Calu3 (cell line): ENCODE measurements at regions of chr1 and their contacts with region 1.

Region 1: DNA sequence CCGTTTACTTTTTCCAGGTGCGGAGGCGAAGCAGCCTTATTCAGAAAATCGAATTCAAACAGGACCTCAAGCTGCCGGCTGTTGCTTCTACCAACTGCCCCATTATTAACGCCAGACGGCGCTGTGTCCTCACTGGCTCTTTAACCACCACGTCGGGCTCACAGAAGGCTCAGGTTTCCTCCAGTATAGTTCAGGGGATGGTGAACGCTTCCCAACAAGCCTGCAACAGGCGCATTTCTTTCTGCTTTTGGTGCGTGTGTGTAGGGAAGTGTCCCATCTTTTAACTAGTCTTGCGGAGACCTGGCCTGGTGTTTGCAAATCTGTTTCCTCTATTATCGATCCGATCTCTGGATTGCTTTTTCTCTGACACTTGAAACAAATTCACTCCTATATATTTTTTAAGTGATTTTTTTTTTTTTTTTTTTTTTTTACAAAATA is 791 bp upstream of the STUM start:
- DNase-seq: peak; percentile 85
- H3K4me3 Mint-ChIP-seq: peak overlapping the region; percentile 51
- H3K27ac Mint-ChIP-seq: no peak overlapping the region
- H3K4me1 Mint-ChIP-seq: no peaks in the 10 kb centered on the region
- H3K27me3 Mint-ChIP-seq: peaks cover 70% of the 10 kb centered on the region
- CTCF ChIP-seq: peak; percentile 70

Region 2: GRCh38 chr1:226092965-226093364 is 454.8 kb before region 1 on chr1:
- CTCF ChIA-PET with region 1: no interaction called
- intact Hi-C with region 1: no loop called
- DNase-seq: no peak
- H3K4me3 Mint-ChIP-seq: no peak overlapping the region
- H3K27ac Mint-ChIP-seq: no peak overlapping the region
- H3K4me1 Mint-ChIP-seq: peaks cover 7% of the 10 kb centered on the region
- H3K27me3 Mint-ChIP-seq: no peaks in the 10 kb centered on the region
- CTCF ChIP-seq: no peak

Region 3: DNA sequence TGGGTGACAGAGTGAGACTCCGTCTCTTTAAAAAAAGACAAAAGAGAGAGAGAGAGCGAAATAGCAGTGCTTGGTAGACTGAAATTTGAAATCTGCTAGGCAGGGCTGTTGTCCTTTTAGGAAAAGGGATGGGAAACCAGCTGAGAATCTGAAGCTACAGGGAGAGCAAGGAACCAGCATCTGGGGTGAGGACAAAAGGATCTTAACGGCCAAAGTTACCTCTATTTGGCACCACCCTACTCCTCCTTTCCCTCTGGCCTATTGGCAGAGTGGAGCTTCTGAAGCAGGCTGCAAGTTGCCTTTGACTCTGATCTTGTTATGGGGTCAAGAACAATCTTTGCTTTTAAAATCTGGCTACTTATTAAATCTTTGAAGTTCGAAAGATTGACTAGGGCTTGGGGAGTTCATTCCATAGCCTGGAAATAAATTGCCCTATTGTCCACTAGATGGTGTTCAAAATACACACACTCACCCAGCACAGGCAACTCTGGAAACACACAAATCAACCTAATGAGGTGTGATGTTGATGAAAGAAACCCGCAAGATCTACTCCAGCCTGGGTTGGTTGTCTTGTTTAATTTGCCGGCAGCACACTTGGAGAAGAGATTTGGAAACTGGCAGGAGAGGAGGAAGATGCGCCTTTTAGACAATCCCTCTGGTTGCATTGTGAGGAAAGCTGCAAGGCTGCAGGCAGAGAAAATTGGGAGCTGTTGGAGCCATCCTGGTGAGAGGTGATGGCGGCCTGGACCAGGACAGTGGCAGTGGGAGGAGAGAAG is 123.4 kb before region 1 on chr1:
- CTCF ChIA-PET with region 1: interaction called, 6 read pairs
- intact Hi-C with region 1: loop called (anchors 5 kb)
- DNase-seq: no peak
- H3K4me3 Mint-ChIP-seq: no peak overlapping the region
- H3K27ac Mint-ChIP-seq: no peak overlapping the region
- H3K4me1 Mint-ChIP-seq: no peaks in the 10 kb centered on the region
- H3K27me3 Mint-ChIP-seq: peaks cover 22% of the 10 kb centered on the region
- CTCF ChIP-seq: peak; percentile 33

Region 4: DNA sequence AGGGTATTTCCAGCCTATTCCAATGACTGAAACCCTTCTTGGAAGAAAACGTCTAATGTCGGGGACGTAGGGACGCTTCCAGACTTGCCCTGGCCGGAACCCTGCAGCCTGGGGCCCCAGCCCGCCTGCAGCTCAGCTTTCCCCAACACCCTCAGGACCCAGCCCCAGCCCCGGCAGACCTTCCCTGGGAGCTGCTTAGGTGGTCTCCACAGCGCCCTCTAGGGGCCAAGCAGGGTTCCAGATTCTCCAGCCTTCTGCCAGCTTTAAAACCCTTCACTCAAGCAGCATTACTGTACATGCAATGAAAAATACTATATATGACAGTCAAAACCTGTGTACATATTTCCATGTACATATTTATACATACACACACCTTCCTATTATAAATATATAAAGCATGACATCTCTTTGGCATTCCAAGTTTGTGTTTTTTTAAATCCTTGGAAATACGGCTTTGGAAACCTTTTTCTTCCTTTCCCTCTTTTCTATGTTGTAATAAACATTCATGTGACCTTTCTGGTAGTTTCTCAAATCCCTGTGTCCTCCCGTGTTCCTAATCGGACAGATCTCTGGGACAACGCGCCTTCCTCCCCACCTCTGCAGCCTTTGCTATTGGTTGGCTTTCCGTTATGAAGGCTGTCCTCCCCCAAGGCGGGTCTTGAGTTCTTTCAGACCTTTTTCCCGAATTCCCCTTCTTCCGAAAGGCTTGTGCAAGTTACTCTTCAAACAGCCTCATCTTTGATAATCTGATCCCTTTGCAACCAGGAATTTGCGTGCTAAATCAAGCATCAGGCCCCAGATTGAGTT is 61.1 kb after region 1 on chr1:
- CTCF ChIA-PET with region 1: interaction called, 12 read pairs
- intact Hi-C with region 1: loop called (anchors 2 kb)
- DNase-seq: peak; percentile 76
- H3K4me3 Mint-ChIP-seq: no peak overlapping the region
- H3K27ac Mint-ChIP-seq: no peak overlapping the region
- H3K4me1 Mint-ChIP-seq: no peaks in the 10 kb centered on the region
- H3K27me3 Mint-ChIP-seq: peaks cover 90% of the 10 kb centered on the region
- CTCF ChIP-seq: peak; percentile 86